Activated CD4-positive, alpha-beta memory T cell treated with anti-CD3 and anti-CD28 coated beads for 36 hours (primary cell): ENCODE measurements at regions of chr6 and their contacts with region 1.

Region 1: GRCh38 chr6:41318654-41319565 is 16.5 kb upstream of the NCR2 start:
- DNase-seq: peak; percentile 88
- H3K4me3 Mint-ChIP-seq: peak overlapping the region; percentile 47
- H3K27ac Mint-ChIP-seq: no peak overlapping the region
- H3K4me1 Mint-ChIP-seq: peaks cover 7% of the 10 kb centered on the region
- H3K27me3 Mint-ChIP-seq: peaks cover 17% of the 10 kb centered on the region

Region 2: DNA sequence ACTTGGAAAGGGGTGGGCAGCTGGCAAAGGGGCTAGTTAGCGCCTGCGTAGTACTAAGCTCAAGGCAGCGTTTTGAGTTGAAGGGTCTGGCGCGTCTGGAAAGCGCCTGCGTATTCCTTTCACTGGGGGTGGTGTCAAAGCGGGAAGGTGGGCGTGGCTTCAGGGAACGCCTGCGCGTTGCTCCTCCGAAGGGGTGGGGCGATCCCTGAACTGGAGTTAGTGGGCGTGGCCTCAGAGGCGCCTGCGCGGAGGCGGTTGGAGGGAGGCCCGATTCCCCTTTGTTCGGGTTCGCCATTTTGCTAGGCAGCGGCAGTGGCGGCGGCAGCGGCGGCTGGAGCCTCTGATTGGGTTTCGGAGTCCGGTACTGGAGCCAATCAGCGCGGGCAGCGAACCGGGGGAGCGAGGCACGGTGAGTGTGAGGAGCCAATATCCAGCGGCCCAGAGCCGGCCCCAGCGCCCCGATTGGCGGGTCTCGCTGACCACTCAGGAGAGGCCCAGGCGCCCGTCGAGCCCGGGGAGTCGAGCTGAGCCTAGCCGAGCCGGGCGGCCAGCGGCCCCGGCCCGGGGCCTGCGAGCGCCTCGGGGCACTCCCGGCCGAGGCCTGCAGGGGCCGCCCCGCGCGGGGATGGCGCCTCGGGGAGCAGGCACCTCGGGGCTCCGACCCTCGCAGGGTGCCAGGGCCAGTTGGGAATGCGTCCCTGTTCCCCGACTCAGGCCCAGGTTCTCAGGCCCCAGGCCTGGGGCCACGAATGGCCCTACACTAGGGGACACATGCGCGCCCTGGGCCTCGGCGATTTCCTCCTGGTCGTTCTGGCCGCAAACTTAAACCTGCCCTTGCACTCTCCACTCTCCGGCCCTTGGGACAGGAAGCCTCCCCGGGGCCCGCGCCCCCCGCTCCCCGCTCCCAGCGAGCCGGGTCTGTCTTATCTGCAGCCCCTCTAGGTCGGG is 246.0 kb before region 1 on chr6 and contains the start of gene NFYA:
- CTCF ChIA-PET with region 1: interaction called, 4 read pairs
- POLR2A ChIA-PET with region 1: no interaction called
- intact Hi-C with region 1: loop called (anchors 1 kb)
- DNase-seq: peak; percentile 100
- H3K4me3 Mint-ChIP-seq: peak within 1 kb of the TSS; percentile 93
- H3K27ac Mint-ChIP-seq: peak within 1 kb of the TSS; percentile 98
- H3K4me1 Mint-ChIP-seq: peaks cover 52% of the 10 kb centered on the region
- H3K27me3 Mint-ChIP-seq: no peaks in the 10 kb centered on the region
- total RNA-seq, gene NFYA: 30.2 to 30.4 TPM

Region 3: GRCh38 chr6:41092421-41093140 is 226.3 kb before region 1 on chr6:
- CTCF ChIA-PET with region 1: interaction called, 6 read pairs
- POLR2A ChIA-PET with region 1: no interaction called
- intact Hi-C with region 1: loop called (anchors 2 kb)
- DNase-seq: no peak
- H3K4me3 Mint-ChIP-seq: no peak overlapping the region
- H3K27ac Mint-ChIP-seq: no peak overlapping the region
- H3K4me1 Mint-ChIP-seq: no peaks in the 10 kb centered on the region
- H3K27me3 Mint-ChIP-seq: no peaks in the 10 kb centered on the region

Region 4: GRCh38 chr6:41200296-41200900 is 118.5 kb before region 1 on chr6:
- CTCF ChIA-PET with region 1: no interaction called
- POLR2A ChIA-PET with region 1: no interaction called
- intact Hi-C with region 1: loop called (anchors 2 kb)
- DNase-seq: peak; percentile 78
- H3K4me3 Mint-ChIP-seq: peak overlapping the region; percentile 69
- H3K27ac Mint-ChIP-seq: peak overlapping the region; percentile 95
- H3K4me1 Mint-ChIP-seq: peaks cover 47% of the 10 kb centered on the region
- H3K27me3 Mint-ChIP-seq: no peaks in the 10 kb centered on the region

Region 5: GRCh38 chr6:41239467-41240159 is 79.3 kb before region 1 on chr6:
- CTCF ChIA-PET with region 1: no interaction called
- POLR2A ChIA-PET with region 1: no interaction called
- intact Hi-C with region 1: no loop called
- DNase-seq: no peak
- H3K4me3 Mint-ChIP-seq: no peak overlapping the region
- H3K27ac Mint-ChIP-seq: no peak overlapping the region
- H3K4me1 Mint-ChIP-seq: no peaks in the 10 kb centered on the region
- H3K27me3 Mint-ChIP-seq: peaks cover 13% of the 10 kb centered on the region

Region 6: DNA sequence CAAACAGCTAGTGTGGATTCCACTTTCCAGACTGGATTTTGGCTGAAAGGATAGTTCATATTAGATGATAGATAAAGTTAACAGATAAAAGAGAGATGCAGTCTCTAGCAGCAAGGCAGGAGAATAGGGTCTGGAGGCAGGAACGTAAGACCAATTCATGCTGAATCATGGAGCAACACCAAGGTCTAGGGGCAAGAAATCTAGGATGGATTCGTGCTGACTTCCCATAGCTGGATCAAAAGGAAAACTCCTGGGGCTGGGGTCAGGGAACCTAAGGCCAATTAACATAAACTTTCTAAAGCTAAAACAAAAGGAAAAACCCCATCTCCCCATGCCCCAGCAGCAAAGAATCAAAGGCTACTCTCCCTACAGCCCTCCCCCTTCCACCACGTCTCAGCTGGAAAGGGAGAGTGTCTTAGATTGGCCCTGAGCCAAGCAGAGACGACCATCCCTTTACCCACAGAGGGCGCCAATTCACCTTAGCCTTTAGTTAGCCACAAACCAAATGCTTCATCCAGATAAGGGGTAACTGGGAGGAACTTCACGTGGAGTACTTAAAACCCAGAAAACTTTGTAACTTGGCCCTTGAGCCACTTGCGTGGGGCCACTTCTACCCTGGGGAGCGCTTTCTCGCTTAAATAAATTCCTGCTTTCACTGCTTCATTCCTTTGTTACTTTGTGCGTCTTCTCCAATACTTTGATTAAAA is 40.1 kb before region 1 on chr6:
- CTCF ChIA-PET with region 1: interaction called, 6 read pairs
- POLR2A ChIA-PET with region 1: no interaction called
- intact Hi-C with region 1: loop called (anchors 1 kb)
- DNase-seq: peak; percentile 80
- H3K4me3 Mint-ChIP-seq: no peak overlapping the region
- H3K27ac Mint-ChIP-seq: no peak overlapping the region
- H3K4me1 Mint-ChIP-seq: peaks cover 11% of the 10 kb centered on the region
- H3K27me3 Mint-ChIP-seq: peaks cover 6% of the 10 kb centered on the region

Region 7: DNA sequence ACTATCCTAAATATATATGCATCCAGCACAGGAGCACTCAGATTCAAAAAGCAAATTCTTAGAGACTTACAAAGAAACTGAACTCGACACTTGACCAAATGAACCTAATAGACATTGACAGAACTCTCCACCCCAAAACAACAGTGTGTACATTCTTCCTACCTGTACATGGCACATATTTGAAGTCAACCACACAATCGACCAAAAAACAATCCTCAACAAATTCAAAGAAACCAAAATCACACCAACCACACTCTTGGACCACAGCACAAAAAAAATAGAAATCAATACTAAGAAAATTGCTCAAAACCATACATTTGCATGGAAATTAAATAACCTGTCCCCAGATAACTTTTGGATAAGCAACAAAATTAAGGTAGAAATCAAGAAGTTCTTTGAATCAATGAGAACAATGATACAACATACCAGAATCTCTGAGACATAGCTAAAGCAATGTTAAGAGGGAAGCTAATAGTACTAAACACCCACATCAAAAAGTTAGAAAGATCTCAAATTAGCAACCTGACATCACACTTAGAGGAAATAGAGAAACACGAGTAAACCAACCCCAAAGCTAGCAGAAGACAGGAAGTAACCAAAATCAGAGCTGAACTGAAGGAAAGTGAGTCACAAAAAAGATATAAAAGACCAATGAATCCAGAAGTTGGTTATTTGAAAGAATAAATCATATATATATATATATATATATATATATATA is 20.0 kb before region 1 on chr6:
- CTCF ChIA-PET with region 1: interaction called, 85 read pairs
- POLR2A ChIA-PET with region 1: no interaction called
- intact Hi-C with region 1: loop called (anchors 2 kb)
- DNase-seq: no peak
- H3K4me3 Mint-ChIP-seq: no peak overlapping the region
- H3K27ac Mint-ChIP-seq: peak overlapping the region; percentile 15
- H3K4me1 Mint-ChIP-seq: peaks cover 27% of the 10 kb centered on the region
- H3K27me3 Mint-ChIP-seq: no peaks in the 10 kb centered on the region

Region 8: GRCh38 chr6:41306187-41306854 is 12.6 kb before region 1 on chr6:
- CTCF ChIA-PET with region 1: interaction called, 85 read pairs
- POLR2A ChIA-PET with region 1: no interaction called
- intact Hi-C with region 1: loop called (anchors 1 kb)
- DNase-seq: peak; percentile 51
- H3K4me3 Mint-ChIP-seq: no peak overlapping the region
- H3K27ac Mint-ChIP-seq: no peak overlapping the region
- H3K4me1 Mint-ChIP-seq: no peaks in the 10 kb centered on the region
- H3K27me3 Mint-ChIP-seq: peaks cover 6% of the 10 kb centered on the region